ENCODE measurements at regions of chr2 and their contacts with region 1.

Region 1: GRCh38 chr2:207166039-207166348 is 246 bp upstream of the KLF7 start:
- DNase-seq: peak; percentile 99
- H3K4me3 Mint-ChIP-seq: peak overlapping the region; percentile 93
- H3K27ac Mint-ChIP-seq: peak overlapping the region; percentile 100
- H3K4me1 Mint-ChIP-seq: peaks cover 36% of the 10 kb centered on the region
- H3K27me3 Mint-ChIP-seq: peaks cover 8% of the 10 kb centered on the region
- CTCF ChIP-seq: no peak

Region 2: DNA sequence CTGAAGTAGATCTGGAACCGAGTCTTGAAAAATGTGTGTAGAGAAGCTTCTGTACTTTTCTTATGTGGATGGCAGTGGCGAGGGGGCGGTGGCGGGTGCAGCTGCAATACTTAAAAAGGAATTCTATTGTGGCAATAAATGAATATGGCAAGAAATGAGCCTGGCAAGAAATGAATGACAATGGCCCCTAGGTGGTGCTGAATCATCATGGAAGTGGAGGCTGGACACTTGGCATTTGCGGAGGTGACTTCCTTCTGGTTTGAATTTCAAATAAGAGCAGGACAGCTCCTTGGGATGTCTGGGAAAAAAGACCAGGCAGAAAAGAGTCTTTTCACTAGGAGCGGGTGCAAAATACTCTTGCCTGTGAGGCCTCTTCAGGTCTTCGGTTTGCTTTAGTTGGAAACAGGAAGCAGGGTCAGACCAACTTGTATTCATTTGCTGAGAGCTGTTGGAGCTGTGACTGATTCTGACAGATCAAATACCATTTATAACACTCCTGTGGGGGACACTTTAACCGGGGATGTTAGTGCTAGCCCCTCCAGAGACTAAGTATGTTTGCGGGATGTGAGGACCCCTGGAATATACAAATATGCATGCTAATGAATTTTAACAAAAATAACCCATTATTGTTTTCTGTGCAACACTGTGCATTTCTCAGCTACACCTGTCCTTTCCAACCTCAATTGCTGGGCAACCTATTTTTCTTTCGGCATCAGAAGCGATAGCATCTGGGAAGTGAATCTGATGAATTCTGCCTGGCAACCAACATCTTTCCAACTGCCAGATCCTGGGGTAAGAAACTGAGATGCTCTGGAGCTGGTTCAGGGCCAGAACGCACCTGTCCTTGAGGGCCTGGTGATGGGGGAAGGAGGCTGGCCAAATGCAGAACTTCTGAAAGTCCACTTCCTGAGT is 365.2 kb before region 1 on chr2:
- CTCF ChIA-PET with region 1: no interaction called
- intact Hi-C with region 1: loop called (anchors 5 kb)
- DNase-seq: peak; percentile 64
- H3K4me3 Mint-ChIP-seq: no peak overlapping the region
- H3K27ac Mint-ChIP-seq: no peak overlapping the region
- H3K4me1 Mint-ChIP-seq: no peaks in the 10 kb centered on the region
- H3K27me3 Mint-ChIP-seq: no peaks in the 10 kb centered on the region
- CTCF ChIP-seq: peak; percentile 62

Region 3: GRCh38 chr2:206989306-206989705 is 176.7 kb before region 1 on chr2:
- CTCF ChIA-PET with region 1: no interaction called
- intact Hi-C with region 1: loop called (anchors 5 kb)
- DNase-seq: peak; percentile 55
- H3K4me3 Mint-ChIP-seq: peak overlapping the region; percentile 20
- H3K27ac Mint-ChIP-seq: no peak overlapping the region
- H3K4me1 Mint-ChIP-seq: peaks cover 9% of the 10 kb centered on the region
- H3K27me3 Mint-ChIP-seq: no peaks in the 10 kb centered on the region
- CTCF ChIP-seq: peak; percentile 76

Region 4: GRCh38 chr2:207121784-207122183 is 44.2 kb before region 1 on chr2:
- CTCF ChIA-PET with region 1: no interaction called
- intact Hi-C with region 1: loop called (anchors 2 kb)
- DNase-seq: peak; percentile 35
- H3K4me3 Mint-ChIP-seq: peak overlapping the region; percentile 15
- H3K27ac Mint-ChIP-seq: peak overlapping the region; percentile 68
- H3K4me1 Mint-ChIP-seq: peaks cover 40% of the 10 kb centered on the region
- H3K27me3 Mint-ChIP-seq: no peaks in the 10 kb centered on the region
- CTCF ChIP-seq: no peak

Region 5: GRCh38 chr2:207180741-207181140 is 14.7 kb after region 1 on chr2:
- CTCF ChIA-PET with region 1: no interaction called
- intact Hi-C with region 1: no loop called
- DNase-seq: no peak
- H3K4me3 Mint-ChIP-seq: no peak overlapping the region
- H3K27ac Mint-ChIP-seq: no peak overlapping the region
- H3K4me1 Mint-ChIP-seq: no peaks in the 10 kb centered on the region
- H3K27me3 Mint-ChIP-seq: no peaks in the 10 kb centered on the region
- CTCF ChIP-seq: no peak

Region 6: GRCh38 chr2:207258263-207258991 is 92.4 kb after region 1 on chr2:
- CTCF ChIA-PET with region 1: no interaction called
- intact Hi-C with region 1: no loop called
- DNase-seq: no peak
- H3K4me3 Mint-ChIP-seq: no peak overlapping the region
- H3K27ac Mint-ChIP-seq: no peak overlapping the region
- H3K4me1 Mint-ChIP-seq: no peaks in the 10 kb centered on the region
- H3K27me3 Mint-ChIP-seq: no peaks in the 10 kb centered on the region
- CTCF ChIP-seq: no peak

Region 7: DNA sequence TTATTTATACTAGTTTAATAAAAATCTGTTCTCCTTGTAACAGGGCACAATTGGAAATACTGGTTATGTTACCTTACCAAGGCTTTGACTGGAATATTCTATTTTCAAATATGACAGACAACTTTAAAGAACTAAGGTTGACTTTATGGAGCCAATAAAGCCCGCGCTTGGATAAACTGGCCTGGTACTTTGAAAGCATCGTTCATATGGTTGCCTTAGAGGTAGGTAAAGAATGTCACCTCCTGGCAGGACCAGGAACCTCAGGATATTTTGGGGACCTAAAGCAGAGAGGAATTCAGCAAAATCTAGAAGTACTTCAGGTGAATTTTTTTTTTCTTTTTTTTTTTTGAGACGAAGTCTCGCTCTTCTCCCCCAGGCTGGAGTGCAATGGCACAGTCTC is 292.6 kb after region 1 on chr2:
- CTCF ChIA-PET with region 1: no interaction called
- intact Hi-C with region 1: no loop called
- DNase-seq: no peak
- H3K4me3 Mint-ChIP-seq: no peak overlapping the region
- H3K27ac Mint-ChIP-seq: no peak overlapping the region
- H3K4me1 Mint-ChIP-seq: no peaks in the 10 kb centered on the region
- H3K27me3 Mint-ChIP-seq: no peaks in the 10 kb centered on the region
- CTCF ChIP-seq: no peak

Region 8: DNA sequence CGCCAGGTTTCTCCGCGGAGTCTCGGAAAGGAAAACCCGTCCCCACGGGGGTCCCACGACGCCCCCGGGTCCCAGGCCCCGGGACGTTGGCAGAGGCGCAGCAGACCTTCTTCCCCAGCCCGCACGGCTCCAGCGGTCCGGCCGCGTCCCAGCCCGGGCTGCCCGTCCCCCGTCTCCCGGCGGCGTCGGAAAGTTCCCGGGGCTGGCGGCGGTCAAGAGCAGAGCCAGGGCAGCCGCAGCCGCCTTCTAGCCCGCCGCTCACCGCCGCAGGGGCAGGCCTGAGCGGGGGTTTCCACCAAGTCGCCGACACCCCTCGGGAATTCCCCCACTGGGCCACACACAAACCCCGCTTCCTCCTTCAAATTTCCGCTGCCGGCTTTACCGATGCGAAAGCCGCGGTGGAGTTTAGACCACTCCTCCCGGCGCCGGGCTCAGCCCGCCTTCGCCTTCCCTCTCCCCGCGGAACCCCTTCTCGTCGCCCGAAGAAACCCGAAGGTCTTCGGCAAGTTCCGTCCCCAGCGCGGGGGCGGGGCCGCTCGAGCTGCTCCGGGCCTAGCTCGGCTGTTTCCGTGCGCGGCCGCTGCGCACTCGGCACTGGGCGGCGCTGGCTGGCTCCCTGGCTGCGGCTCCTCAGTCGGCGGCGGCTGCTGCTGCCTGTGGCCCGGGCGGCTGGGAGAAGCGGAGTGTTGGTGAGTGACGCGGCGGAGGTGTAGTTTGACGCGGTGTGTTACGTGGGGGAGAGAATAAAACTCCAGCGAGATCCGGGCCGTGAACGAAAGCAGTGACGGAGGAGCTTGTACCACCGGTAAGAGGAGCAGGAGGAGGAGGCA is 363.6 kb after region 1 on chr2 and contains the start of gene CREB1:
- CTCF ChIA-PET with region 1: no interaction called
- intact Hi-C with region 1: loop called (anchors 5 kb)
- DNase-seq: peak; percentile 99
- H3K4me3 Mint-ChIP-seq: peak within 1 kb of the TSS; percentile 85
- H3K27ac Mint-ChIP-seq: peak within 1 kb of the TSS; percentile 97
- H3K4me1 Mint-ChIP-seq: peaks cover 20% of the 10 kb centered on the region
- H3K27me3 Mint-ChIP-seq: no peaks in the 10 kb centered on the region
- CTCF ChIP-seq: no peak
- total RNA-seq, gene CREB1: 81.4 and 81.6 TPM in 2 replicates